ENCODE measurements at regions of chrX and their contacts with region 1.

Region 1: GRCh38 chrX:53317365-53318069 is 36.1 kb upstream of the IQSEC2 start:
- DNase-seq: peak; percentile 54 to 80 (median 68)
- ATAC-seq: peak; percentile 52
- H3K4me3 ChIP-seq: no peak overlapping the region
- H3K27ac ChIP-seq: peak overlapping the region in 1 of 4 donors; percentile 25
- H3K4me1 ChIP-seq: peaks cover 32% of the 10 kb centered on the region
- H3K27me3 ChIP-seq: no peaks in the 10 kb centered on the region
- CTCF ChIP-seq: peak; percentile 47 to 82 (median 69)
- POLR2A ChIP-seq: no peak

Region 2: GRCh38 chrX:53433651-53434639 is 116.4 kb after region 1 on chrX and contains the start of gene HSD17B10:
- intact Hi-C with region 1: loop called (anchors 10 kb)
- DNase-seq: peak; percentile 88 to 93 (median 92)
- ATAC-seq: peak; percentile 99
- H3K4me3 ChIP-seq: peak within 1 kb of the TSS; percentile 24 to 45
- H3K27ac ChIP-seq: peak within 1 kb of the TSS in 2 of 4 donors; percentile 68 to 76
- H3K4me1 ChIP-seq: peaks cover 12% of the 10 kb centered on the region
- H3K27me3 ChIP-seq: no peaks in the 10 kb centered on the region
- CTCF ChIP-seq: no peak
- POLR2A ChIP-seq: peak in 2 of 3 donors; percentile 63 to 66
- total RNA-seq, gene HSD17B10: 40.5 to 50.1 TPM

Measured in body of pancreas (tissue), 4 donors.